ENCODE measurements at regions of chr2 and their contacts with region 1.

Region 1: DNA sequence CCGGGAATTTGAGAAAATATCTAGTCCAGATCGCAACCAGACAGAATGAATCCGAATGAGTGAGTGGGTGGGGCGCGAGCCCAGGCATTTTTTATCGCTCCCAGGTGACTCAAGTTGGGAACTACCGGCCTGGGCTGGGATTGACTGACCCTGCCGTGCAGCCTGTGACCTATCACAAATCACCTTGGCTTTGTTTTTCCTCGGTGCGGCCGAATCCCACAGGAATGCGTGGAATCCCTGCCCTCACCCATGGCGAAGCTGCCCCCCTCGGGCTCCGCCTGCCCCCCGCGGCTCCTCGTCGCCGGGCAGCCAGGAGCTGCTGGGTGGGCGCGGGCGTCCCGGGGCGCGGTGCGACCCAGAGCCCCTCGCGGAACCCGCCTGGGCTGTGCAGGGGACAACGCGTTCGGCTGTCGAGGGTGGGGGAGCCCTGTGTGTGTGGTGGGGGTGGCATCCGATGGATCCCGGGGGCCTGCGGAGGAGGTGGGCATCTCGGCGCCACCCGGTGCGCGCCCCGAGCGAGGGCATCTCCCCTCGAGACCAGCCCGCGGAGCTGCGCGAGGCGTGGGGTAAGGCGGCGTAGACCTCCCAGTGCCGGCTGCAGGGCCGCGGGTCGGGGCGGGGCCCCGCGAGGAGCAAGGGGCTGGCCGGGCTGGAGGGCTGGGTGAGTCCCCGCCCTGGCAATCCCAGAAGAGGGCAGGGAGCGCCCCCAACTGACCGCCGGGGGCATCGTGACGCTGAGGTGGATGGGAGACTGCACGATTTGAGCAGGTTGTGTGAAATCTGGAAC is 16.5 kb downstream of the B3GNT7 start:
- DNase-seq: peak; percentile 76 to 94 (median 88)
- ATAC-seq: peak; percentile 99
- H3K4me3 ChIP-seq: peak overlapping the region; percentile 41 to 49
- H3K27ac ChIP-seq: no peak overlapping the region
- H3K4me1 ChIP-seq: peaks cover 5 to 9% of the 10 kb centered on the region in 2 donors
- H3K27me3 ChIP-seq: peaks cover 0 to 48% of the 10 kb centered on the region in 2 donors
- CTCF ChIP-seq: peak; percentile 70 to 84

Region 2: GRCh38 chr2:231104115-231104713 is 307.8 kb before region 1 on chr2:
- intact Hi-C with region 1: loop called in 1 of 2 experiments (anchors 10 kb)
- DNase-seq: peak in 3 of 4 donors; percentile 35 to 73 (median 41)
- ATAC-seq: peak; percentile 96
- H3K4me3 ChIP-seq: no peak overlapping the region
- H3K27ac ChIP-seq: no peak overlapping the region
- H3K4me1 ChIP-seq: peaks cover 0 to 8% of the 10 kb centered on the region in 2 donors
- H3K27me3 ChIP-seq: no peaks in the 10 kb centered on the region
- CTCF ChIP-seq: peak; percentile 57 to 65

Region 3: DNA sequence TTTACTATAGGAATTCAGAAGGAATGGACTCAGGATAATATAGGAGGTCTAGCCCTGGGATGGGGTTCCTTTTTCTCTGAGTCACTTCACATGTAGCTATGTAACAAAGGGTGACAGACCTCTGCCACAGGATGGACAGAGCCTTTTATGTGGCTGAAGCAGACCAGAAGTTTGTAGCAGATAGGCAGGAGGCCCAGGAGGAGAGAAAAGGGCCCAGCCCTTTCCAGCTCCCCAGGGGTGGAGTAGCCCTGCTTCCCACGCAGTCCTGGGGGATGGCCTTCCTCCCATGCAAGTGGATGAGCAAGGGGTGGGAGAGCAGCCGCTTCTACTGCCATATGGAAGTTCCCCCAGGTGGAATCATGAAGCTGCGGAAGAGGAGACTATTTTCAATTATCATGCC is 173.3 kb before region 1 on chr2:
- intact Hi-C with region 1: loop called in 1 of 2 experiments (anchors 10 kb)
- DNase-seq: no peak
- ATAC-seq: no peak
- H3K4me3 ChIP-seq: no peak overlapping the region
- H3K27ac ChIP-seq: no peak overlapping the region
- H3K4me1 ChIP-seq: peaks cover 3 to 9% of the 10 kb centered on the region in 2 donors
- H3K27me3 ChIP-seq: no peaks in the 10 kb centered on the region
- CTCF ChIP-seq: no peak

Measured in left lung (tissue), 14 donors.